ENCODE measurements at regions of chr11 and their contacts with region 1.

Region 1: DNA sequence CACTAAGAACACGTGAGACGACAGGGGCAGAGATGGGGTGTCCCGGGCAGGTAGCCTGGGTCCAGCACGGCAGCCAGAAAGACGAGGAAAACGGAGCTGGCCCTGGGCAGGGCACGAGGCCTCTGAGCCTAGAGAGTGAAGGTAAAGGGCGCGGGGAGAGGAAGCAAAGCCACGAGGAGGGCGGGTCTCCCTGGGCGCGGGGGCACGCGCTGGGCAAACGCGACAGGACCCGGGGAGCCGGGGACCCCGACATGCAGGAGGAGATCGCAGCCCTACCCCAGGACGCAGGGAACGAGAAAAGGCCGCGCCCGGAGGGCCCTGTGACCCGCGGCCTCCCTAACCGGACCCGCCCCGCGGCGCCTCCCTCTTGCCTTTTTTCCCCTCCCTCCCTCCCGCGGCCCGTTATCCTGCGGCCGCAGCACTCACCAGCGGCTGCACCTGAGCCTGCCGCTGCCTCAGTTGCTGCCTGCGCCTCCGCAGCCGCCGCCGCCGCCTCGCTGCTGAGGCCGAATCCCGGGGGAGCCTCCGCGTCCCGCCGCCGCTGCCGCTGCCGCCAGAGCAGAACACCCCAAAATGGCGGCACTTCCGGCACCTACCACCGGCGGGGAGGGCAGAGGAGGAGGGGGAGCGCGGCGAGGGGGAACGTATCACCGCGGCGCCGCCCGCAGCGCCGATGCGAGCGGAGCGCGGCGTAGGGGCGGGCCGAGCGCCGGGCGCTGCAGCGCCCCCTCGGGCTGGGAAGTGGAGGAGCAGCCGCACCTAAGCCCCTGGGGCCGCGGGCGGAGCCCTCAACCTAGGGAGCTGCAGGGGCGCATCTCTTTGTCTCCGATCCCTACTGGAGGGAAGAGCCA is at the start of gene CELF1:
- DNase-seq: peak; percentile 92 to 94 (median 93)
- H3K4me3 ChIP-seq: peak within 1 kb of the TSS; percentile 85 to 91
- H3K4me3 Mint-ChIP-seq: peak within 1 kb of the TSS; percentile 94 to 98 (median 96)
- H3K27ac ChIP-seq: peak within 1 kb of the TSS; percentile 88
- H3K27ac Mint-ChIP-seq: peak within 1 kb of the TSS; percentile 93 to 98 (median 97)
- H3K4me1 ChIP-seq: peaks cover 50% of the 10 kb centered on the region
- H3K4me1 Mint-ChIP-seq: peaks cover 30 to 51% (median 40%) of the 10 kb centered on the region in 4 donors
- H3K27me3 ChIP-seq: no peaks in the 10 kb centered on the region
- H3K27me3 Mint-ChIP-seq: no peaks in the 10 kb centered on the region
- total RNA-seq, gene CELF1: 145 to 149 TPM

Region 2: DNA sequence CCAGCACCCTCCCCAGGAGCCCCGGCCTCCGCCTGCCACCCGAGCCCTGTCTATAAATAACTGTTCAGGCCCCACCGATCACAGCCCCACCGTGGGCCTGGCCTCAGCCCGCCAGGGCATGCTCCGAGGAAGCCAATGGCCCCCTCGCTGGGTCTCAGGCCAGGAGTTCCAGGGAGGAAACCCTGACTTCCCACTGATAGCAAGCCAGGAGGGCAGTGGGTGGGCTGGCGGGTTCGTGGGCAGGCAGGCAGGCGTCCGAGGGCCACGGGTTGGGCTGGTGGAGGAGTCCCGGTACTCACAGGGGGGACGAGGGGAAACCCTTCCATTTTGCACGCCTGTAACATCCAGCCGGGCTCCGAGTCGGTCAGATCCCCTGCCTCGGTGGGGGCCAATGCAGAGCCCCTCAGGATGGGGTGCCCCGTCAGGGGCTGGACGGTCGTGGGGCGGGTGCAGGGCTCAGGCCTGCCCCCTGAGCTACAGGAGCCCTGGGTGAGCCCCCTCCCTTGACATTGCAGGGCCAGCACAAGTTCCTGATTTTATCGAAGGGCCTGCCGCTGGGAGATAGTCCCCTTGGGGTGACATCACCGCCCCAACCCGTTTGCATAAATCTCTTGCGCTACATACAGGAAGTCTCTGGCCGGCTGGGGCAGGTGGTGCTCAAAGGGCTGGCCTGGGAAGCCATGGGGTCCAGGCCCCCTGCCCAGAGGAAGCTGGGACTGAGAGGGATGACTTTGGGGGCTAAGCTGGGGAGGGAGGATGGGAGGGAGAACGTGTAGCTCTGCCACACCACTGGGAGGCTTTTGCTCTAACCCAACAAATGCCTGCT is 174.6 kb before region 1 on chr11 and contains the start of gene SPI1:
- CTCF ChIA-PET with region 1: no interaction called
- POLR2A ChIA-PET with region 1: no interaction called
- intact Hi-C with region 1: no loop called
- DNase-seq: no peak
- H3K4me3 ChIP-seq: no peak within 1 kb of the TSS
- H3K4me3 Mint-ChIP-seq: no peak within 1 kb of the TSS
- H3K27ac ChIP-seq: no peak within 1 kb of the TSS
- H3K27ac Mint-ChIP-seq: peak within 1 kb of the TSS in 1 of 7 donors; percentile 21
- H3K4me1 ChIP-seq: peaks cover 7% of the 10 kb centered on the region
- H3K4me1 Mint-ChIP-seq: peaks cover 0 to 5% (median 1%) of the 10 kb centered on the region in 4 donors
- H3K27me3 ChIP-seq: no peaks in the 10 kb centered on the region
- H3K27me3 Mint-ChIP-seq: no peaks in the 10 kb centered on the region
- total RNA-seq, gene SPI1: 4.8 to 5.0 TPM

Region 3: DNA sequence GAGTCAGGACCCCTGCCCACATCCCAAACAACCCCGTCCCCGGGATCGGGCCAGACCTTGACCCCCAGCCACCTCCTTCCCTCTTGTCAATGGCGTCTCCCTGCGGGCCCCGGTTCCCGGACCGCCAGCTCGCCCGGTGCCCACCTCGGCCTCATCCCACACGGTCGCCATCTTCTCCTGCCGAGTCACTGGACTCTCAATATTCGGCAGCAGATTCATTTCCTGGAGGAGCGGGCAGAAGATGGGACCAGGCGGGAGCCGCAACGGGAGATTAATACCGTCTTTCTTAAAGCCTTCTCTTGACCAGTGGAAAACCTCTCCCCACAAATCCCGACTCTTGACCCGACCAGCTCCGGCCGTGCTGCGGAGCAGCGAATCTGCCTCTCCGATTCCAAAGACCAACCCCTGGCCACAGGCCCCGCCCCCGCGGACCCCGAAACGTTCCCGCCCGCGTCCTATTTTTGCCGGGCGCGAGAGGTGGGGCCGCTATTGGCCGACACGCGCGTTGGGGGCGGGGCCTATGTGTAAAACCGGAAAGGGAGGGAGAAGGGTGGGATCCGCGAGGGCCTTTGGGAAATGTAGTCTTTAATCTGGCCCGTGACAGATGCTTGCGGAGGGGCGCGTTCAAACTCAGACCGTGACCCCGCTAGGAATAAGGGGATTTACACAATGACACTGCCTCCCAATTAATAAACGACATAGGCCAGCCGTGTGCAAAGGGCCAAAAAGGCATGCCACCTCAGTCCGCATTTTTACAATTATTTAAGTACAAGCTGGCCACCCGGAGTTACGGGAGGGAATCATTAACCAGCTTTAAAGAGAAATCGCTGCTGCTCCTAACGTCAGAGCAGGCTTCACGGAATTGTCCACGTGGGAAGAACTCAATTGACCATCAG is 126.5 kb before region 1 on chr11 and contains the start of gene PSMC3:
- CTCF ChIA-PET with region 1: interaction called, 3 read pairs
- POLR2A ChIA-PET with region 1: interaction called, 4 read pairs
- intact Hi-C with region 1: loop called (anchors 1 kb)
- DNase-seq: peak; percentile 94 to 97 (median 96)
- H3K4me3 ChIP-seq: peak within 1 kb of the TSS; percentile 64 to 91
- H3K4me3 Mint-ChIP-seq: peak within 1 kb of the TSS; percentile 99 to 100 (median 100)
- H3K27ac ChIP-seq: peak within 1 kb of the TSS; percentile 85
- H3K27ac Mint-ChIP-seq: peak within 1 kb of the TSS; percentile 92 to 99 (median 99)
- H3K4me1 ChIP-seq: peaks cover 18% of the 10 kb centered on the region
- H3K4me1 Mint-ChIP-seq: peaks cover 12 to 32% (median 22%) of the 10 kb centered on the region in 4 donors
- H3K27me3 ChIP-seq: no peaks in the 10 kb centered on the region
- H3K27me3 Mint-ChIP-seq: no peaks in the 10 kb centered on the region
- total RNA-seq, gene PSMC3: 53.9 to 59.6 TPM

Region 4: DNA sequence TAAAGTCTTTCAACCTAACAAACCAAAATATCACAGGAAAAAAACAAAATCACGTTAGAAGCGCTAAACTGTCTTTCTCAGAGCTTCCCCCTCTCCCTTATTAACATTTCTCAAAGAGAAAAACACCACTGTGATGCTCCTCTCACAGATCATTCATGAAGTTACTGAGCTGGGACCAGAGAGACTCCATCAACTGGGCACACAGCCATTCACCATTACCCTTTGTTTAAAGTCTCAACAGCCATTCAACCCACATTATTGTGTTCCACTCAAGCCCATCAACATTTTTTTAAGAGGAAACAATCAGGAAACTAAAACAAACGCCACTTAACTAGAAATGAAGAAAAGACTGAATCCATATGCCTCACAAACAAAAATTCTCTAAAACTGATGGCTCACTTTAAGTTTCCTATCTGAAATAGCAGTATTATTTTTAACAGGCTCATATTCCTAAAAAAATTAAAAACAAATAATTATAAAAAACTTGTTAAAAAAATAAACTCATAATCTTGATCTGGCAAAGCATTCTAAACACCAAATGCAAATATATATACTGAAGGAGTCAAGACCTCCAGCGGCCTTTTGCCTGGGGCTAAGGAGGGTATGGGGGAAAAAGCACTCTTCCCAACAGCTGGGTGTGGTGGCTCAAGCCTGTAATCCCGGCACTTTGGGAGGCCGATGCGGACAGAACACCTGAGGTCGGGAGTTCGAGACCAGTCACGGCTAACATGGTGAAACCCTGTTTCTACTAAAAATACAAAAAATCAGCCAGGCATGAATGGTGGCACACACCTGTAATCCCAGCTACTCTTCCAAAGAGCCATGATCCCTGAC is 13.8 kb before region 1 on chr11:
- CTCF ChIA-PET with region 1: interaction called, 4 read pairs
- POLR2A ChIA-PET with region 1: interaction called, 12 read pairs
- intact Hi-C with region 1: no loop called
- DNase-seq: no peak
- H3K4me3 ChIP-seq: no peak overlapping the region
- H3K4me3 Mint-ChIP-seq: peak overlapping the region in 5 of 8 donors; percentile 13 to 77 (median 55)
- H3K27ac ChIP-seq: no peak overlapping the region
- H3K27ac Mint-ChIP-seq: peak overlapping the region in 6 of 7 donors; percentile 30 to 90 (median 56)
- H3K4me1 ChIP-seq: peaks cover 75% of the 10 kb centered on the region
- H3K4me1 Mint-ChIP-seq: peaks cover 43 to 80% (median 63%) of the 10 kb centered on the region in 4 donors
- H3K27me3 ChIP-seq: no peaks in the 10 kb centered on the region
- H3K27me3 Mint-ChIP-seq: no peaks in the 10 kb centered on the region

Region 5: DNA sequence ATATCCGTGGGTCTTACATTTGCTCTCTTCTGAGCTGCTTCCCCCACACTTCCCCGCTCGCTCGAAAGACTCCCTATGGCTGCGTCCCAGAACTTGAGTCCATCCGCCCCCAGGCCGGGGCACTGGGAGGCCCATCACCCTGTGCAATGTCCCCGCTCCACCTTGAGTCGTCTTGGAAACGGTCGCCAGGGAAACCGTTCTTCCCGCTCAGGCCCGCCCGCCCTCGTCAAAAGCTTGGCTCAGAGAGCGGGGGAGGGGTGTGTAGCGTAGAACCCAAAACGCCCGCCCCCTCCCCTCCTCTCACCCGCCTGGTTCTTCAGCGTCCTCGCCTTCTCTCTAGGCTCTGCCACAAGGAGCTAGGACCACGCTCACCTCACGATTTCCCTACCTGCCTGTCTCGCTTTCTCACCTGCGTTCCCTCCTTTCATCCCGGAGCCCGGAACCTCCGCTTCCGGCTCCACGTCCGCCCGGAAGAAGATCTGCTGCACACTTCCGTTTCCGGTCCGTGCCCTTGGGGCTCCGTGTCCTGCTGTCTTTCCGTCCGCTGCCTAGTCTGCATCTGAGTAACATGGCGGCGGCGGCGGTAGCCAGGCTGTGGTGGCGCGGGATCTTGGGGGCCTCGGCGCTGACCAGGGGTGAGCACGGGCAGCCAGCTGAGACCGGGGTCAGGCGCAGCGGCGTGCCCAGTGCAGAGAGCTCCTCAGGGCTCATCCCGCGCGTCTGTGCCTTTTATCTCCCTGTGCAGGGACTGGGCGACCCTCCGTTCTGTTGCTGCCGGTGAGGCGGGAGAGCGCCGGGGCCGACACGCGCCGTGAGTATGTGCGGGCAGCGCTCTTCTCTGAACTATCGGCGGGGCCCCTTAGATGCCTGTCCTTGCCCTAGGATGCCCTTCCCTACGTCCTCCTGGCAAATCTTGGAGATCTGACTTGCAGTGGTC is 26.0 kb after region 1 on chr11 and contains the starts of genes KBTBD4 and NDUFS3:
- CTCF ChIA-PET with region 1: interaction called, 4 read pairs
- POLR2A ChIA-PET with region 1: interaction called, 34 read pairs
- intact Hi-C with region 1: loop called (anchors 1 kb)
- DNase-seq: peak; percentile 87 to 90 (median 88)
- H3K4me3 ChIP-seq: peak within 1 kb of the TSS; percentile 80 to 93
- H3K4me3 Mint-ChIP-seq: peak within 1 kb of the TSS; percentile 97 to 100 (median 100)
- H3K27ac ChIP-seq: peak within 1 kb of the TSS; percentile 83
- H3K27ac Mint-ChIP-seq: peak within 1 kb of the TSS; percentile 96 to 100 (median 100)
- H3K4me1 ChIP-seq: peaks cover 42% of the 10 kb centered on the region
- H3K4me1 Mint-ChIP-seq: peaks cover 19 to 48% (median 35%) of the 10 kb centered on the region in 4 donors
- H3K27me3 ChIP-seq: no peaks in the 10 kb centered on the region
- H3K27me3 Mint-ChIP-seq: peaks cover 0 to 1% of the 10 kb centered on the region in 2 donors
- total RNA-seq, gene KBTBD4: 21.2 to 22.5 TPM
- total RNA-seq, gene NDUFS3: 70.9 to 71.0 TPM

Region 6: GRCh38 chr11:47847892-47848635 is 295.3 kb after region 1 on chr11 and contains the start of gene NUP160:
- CTCF ChIA-PET with region 1: no interaction called
- POLR2A ChIA-PET with region 1: no interaction called
- intact Hi-C with region 1: loop called (anchors 10 kb)
- DNase-seq: peak; percentile 85 to 88 (median 86)
- H3K4me3 ChIP-seq: peak within 1 kb of the TSS; percentile 70 to 91
- H3K4me3 Mint-ChIP-seq: peak within 1 kb of the TSS; percentile 95 to 100 (median 99)
- H3K27ac ChIP-seq: peak within 1 kb of the TSS; percentile 97
- H3K27ac Mint-ChIP-seq: peak within 1 kb of the TSS; percentile 93 to 100 (median 99)
- H3K4me1 ChIP-seq: peaks cover 64% of the 10 kb centered on the region
- H3K4me1 Mint-ChIP-seq: peaks cover 31 to 72% (median 51%) of the 10 kb centered on the region in 4 donors
- H3K27me3 ChIP-seq: no peaks in the 10 kb centered on the region
- H3K27me3 Mint-ChIP-seq: no peaks in the 10 kb centered on the region
- total RNA-seq, gene NUP160: 57.6 to 62.2 TPM